ENCODE measurements at regions of chr17 and their contacts with region 1.

Region 1: DNA sequence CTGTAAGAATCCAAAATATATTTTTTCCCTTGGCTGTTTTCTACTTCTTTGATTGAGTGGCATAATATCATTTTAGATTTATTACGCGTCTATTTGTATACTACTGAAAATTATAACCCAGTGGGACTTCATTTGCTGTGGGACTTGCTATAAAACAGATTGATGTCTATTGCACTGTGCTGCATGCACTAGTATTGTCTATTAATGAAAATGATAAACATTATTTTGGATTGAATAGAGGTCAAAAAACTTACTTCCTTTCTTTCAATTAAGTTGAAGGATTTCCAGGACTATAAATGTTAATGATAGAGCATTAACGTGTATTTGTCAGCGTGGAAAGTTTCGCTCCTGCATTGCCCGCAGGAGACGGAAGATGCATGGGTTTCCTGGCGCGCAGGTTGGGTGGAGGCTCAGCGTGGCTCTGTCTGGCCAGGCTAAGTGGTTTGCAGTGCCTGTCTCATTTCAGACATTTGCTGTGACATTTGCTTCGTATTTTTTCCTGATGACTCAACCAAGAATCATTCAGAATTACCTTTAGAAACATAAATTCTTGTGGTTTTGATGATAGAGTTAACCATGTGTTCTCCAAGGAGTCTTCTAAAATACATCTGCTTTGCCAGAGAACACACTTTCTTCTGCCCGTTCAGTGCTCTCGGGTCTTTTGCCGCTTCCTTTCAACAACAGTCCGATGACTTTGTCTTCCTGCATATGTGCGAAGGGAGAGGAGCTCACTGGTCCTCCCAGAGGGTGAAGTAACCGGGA is 216.7 kb downstream of the RPTOR start:
- DNase-seq: peak; percentile 22 to 85 (median 68)
- ATAC-seq: peak; percentile 74
- H3K4me3 ChIP-seq: peak overlapping the region; percentile 7
- H3K4me3 Mint-ChIP-seq: peak overlapping the region; percentile 81
- H3K27ac ChIP-seq: peak overlapping the region; percentile 49 to 67
- H3K27ac Mint-ChIP-seq: peak overlapping the region; percentile 91
- H3K4me1 ChIP-seq: peaks cover 67% of the 10 kb centered on the region
- H3K4me1 Mint-ChIP-seq: peaks cover 84% of the 10 kb centered on the region
- H3K27me3 ChIP-seq: no peaks in the 10 kb centered on the region
- H3K27me3 Mint-ChIP-seq: no peaks in the 10 kb centered on the region
- CTCF ChIP-seq: no peak

Region 2: DNA sequence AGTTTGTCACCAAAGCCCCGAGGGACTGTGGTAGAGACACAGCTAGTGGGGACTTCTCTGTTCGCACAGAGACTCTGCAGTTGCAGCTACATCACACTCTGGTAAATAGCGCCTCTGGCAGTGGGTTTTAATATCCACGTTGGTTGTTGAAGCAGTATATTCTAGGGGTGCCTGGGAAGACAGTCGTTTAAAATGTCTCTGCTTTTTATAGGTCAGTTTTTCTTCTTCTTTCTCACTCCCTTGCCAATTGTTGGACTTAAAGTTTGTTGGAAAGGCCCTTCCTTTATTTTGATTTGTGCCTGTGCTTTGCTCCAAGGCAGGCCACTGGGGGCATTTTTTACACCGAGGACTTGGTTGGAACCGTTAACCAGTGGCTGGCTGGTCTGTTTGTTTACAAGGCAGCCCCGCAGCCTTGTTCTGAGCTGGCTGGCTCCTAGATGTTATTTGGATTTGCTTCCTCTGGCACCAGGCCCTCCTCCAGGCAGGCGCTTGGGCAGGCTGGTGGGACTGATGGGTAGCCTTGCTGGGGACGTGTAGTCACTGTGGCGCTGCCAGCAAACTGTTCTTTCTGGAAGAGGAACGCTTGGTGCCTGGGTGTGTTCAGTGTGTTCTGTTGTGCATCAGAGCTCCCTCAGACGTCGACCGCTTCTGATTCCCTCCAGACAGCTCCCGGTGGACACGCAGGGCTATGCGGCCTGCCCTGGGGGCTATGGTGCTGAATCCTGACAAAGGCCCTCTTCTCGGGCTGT is 12.1 kb after region 1 on chr17:
- CTCF ChIA-PET with region 1: interaction called, 7 read pairs
- POLR2A ChIA-PET with region 1: interaction called, 11 read pairs
- intact Hi-C with region 1: no loop called
- DNase-seq: peak in 1 of 14 experiments; percentile 45
- ATAC-seq: peak; percentile 81
- H3K4me3 ChIP-seq: no peak overlapping the region
- H3K4me3 Mint-ChIP-seq: peak overlapping the region; percentile 70
- H3K27ac ChIP-seq: no peak overlapping the region
- H3K27ac Mint-ChIP-seq: peak overlapping the region; percentile 91
- H3K4me1 ChIP-seq: peaks cover 39% of the 10 kb centered on the region
- H3K4me1 Mint-ChIP-seq: peaks cover 84% of the 10 kb centered on the region
- H3K27me3 ChIP-seq: no peaks in the 10 kb centered on the region
- H3K27me3 Mint-ChIP-seq: no peaks in the 10 kb centered on the region
- CTCF ChIP-seq: no peak

Region 3: DNA sequence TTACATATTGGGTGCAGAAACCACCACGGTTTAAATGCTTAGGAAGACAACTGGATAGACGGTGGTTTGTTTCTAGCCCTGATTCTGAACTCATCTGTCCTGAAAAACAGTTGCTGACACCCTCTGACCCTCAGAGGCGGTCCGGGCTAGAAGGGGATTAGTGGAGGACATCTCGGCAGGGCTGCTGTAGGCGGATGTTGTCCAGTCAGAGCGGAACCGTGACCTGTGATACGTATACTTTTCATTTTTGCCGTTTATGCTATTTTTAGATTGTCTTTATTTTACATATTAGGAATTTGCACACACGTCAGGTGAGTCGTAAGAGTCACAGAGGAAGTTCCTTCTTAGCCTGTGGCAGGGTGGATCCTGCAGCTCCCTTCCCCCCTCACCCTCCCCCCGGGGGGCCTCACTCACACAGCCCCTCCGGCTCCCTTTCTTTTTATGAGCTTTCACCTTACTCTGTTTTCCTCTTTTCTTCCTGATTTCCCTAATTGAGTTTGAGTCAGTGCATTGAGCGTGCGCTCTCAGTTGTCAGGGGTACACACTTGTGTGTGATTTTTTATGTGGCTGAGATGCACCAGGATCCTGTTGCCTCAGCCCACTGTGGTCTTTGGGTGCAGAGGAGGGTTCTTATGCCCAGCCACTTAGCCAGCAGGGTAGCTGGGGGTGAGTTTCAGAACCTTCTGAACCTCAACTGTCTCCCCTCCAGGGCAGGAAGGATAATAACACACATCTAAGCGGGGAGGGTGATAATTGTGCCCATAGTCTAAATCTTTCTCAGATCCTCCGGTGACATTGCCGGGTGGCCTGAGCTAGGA is 19.3 kb after region 1 on chr17:
- CTCF ChIA-PET with region 1: interaction called, 7 read pairs
- POLR2A ChIA-PET with region 1: interaction called, 16 read pairs
- intact Hi-C with region 1: loop called in 1 of 2 experiments (anchors 2 kb)
- DNase-seq: peak in 3 of 14 experiments; percentile 50 to 67 (median 50)
- ATAC-seq: peak; percentile 54
- H3K4me3 ChIP-seq: peak overlapping the region; percentile 32
- H3K4me3 Mint-ChIP-seq: peak overlapping the region; percentile 36
- H3K27ac ChIP-seq: peak overlapping the region; percentile 55 to 75
- H3K27ac Mint-ChIP-seq: peak overlapping the region; percentile 85
- H3K4me1 ChIP-seq: peaks cover 58% of the 10 kb centered on the region
- H3K4me1 Mint-ChIP-seq: peaks cover 76% of the 10 kb centered on the region
- H3K27me3 ChIP-seq: no peaks in the 10 kb centered on the region
- H3K27me3 Mint-ChIP-seq: no peaks in the 10 kb centered on the region
- CTCF ChIP-seq: no peak

Measured in CD4-positive, alpha-beta T cell (primary cell).